HAP-1 (cell line): ENCODE measurements at regions of chr6 and their contacts with region 1.

Region 1: DNA sequence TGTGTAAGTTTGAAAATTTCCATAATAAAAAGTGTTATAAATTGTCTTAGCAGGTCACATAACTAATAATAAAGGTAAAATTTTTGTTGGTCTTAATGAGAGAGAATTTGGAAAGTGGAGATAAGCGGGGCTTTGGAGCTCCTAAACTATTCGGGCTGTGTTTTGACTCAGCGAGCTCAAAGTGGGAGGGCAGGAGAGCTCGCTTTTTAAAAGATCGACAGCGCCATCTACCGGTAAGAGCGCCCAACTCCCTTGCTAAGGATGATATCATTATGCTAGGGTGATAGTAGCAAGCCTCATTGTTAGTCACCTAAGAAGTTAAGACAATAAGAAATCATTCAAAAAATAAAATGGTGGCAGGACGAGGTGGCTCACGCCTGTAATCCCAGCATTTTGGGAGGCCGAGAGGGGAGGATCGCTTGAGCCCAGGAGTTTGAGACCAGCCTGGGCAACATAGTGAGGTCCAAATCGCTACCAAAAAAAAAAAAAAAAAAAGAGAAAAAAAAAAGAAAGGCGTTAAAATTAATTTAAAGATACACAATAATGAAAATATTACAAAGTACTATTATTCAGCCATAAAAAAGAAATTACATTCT is 24.8 kb downstream of the C6orf15 start:
- DNase-seq: peak; percentile 80 to 92
- H3K4me3 ChIP-seq: no peak overlapping the region
- H3K4me1 ChIP-seq: peaks cover 13% of the 10 kb centered on the region
- H3K27me3 ChIP-seq: no peaks in the 10 kb centered on the region

Region 2: GRCh38 chr6:30489081-30490025 is 598.2 kb before region 1 on chr6 and contains the start of gene HLA-E:
- in situ Hi-C with region 1: loop called (anchors 25 kb)
- DNase-seq: peak; percentile 92 to 98
- H3K4me3 ChIP-seq: peak within 1 kb of the TSS; percentile 64
- H3K4me1 ChIP-seq: peaks cover 9% of the 10 kb centered on the region
- H3K27me3 ChIP-seq: no peaks in the 10 kb centered on the region; the same call in 1 of the 2 replicates